ENCODE measurements at regions of chr9 and their contacts with region 1.

Region 1: GRCh38 chr9:6305954-6306563 is 22.1 kb upstream of the TPD52L3 start:
- DNase-seq: no peak
- H3K4me3 Mint-ChIP-seq: no peak overlapping the region
- H3K27ac Mint-ChIP-seq: no peak overlapping the region
- H3K4me1 Mint-ChIP-seq: no peaks in the 10 kb centered on the region
- H3K27me3 Mint-ChIP-seq: no peaks in the 10 kb centered on the region

Region 2: GRCh38 chr9:6126374-6126773 is 179.7 kb before region 1 on chr9:
- CTCF ChIA-PET with region 1: no interaction called
- POLR2A ChIA-PET with region 1: no interaction called
- intact Hi-C with region 1: loop called (anchors 10 kb)
- DNase-seq: no peak
- H3K4me3 Mint-ChIP-seq: no peak overlapping the region
- H3K27ac Mint-ChIP-seq: no peak overlapping the region
- H3K4me1 Mint-ChIP-seq: no peaks in the 10 kb centered on the region
- H3K27me3 Mint-ChIP-seq: peaks cover 6% of the 10 kb centered on the region

Measured in activated CD4-positive, alpha-beta memory T cell treated with anti-CD3 and anti-CD28 coated beads for 36 hours (primary cell).